T-cell (primary cell): ENCODE measurements at regions of chr12 and their contacts with region 1.

Region 1: GRCh38 chr12:53530920-53531319 is 23.6 kb upstream of the NPFF start:
- DNase-seq: no peak
- ATAC-seq: no peak
- H3K4me3 ChIP-seq: no peak overlapping the region
- H3K4me3 Mint-ChIP-seq: no peak overlapping the region
- H3K27ac ChIP-seq: no peak overlapping the region
- H3K27ac Mint-ChIP-seq: no peak overlapping the region
- H3K4me1 ChIP-seq: no peaks in the 10 kb centered on the region
- H3K4me1 Mint-ChIP-seq: no peaks in the 10 kb centered on the region
- H3K27me3 ChIP-seq: no peaks in the 10 kb centered on the region
- H3K27me3 Mint-ChIP-seq: no peaks in the 10 kb centered on the region

Region 2: GRCh38 chr12:53441040-53441833 is 89.7 kb before region 1 on chr12 and contains the start of gene PRR13:
- CTCF ChIA-PET with region 1: no interaction called
- POLR2A ChIA-PET with region 1: no interaction called
- DNase-seq: peak; percentile 92 to 100 (median 99)
- ATAC-seq: peak; percentile 98 to 99 (median 99)
- H3K4me3 ChIP-seq: peak within 1 kb of the TSS; percentile 90 to 94
- H3K4me3 Mint-ChIP-seq: peak within 1 kb of the TSS; percentile 86 to 97 (median 95)
- H3K27ac ChIP-seq: peak within 1 kb of the TSS; percentile 74
- H3K27ac Mint-ChIP-seq: peak within 1 kb of the TSS; percentile 96 to 98
- H3K4me1 ChIP-seq: peaks cover 14 to 34% of the 10 kb centered on the region in 2 experiments
- H3K4me1 Mint-ChIP-seq: peaks cover 38 to 51% (median 47%) of the 10 kb centered on the region in 3 donors
- H3K27me3 ChIP-seq: no peaks in the 10 kb centered on the region
- H3K27me3 Mint-ChIP-seq: no peaks in the 10 kb centered on the region
- total RNA-seq, gene PRR13: 175 to 215 (median 187) TPM

Region 3: GRCh38 chr12:53568809-53569557 is 38.1 kb after region 1 on chr12:
- CTCF ChIA-PET with region 1: interaction called, 5 to 10 read pairs
- POLR2A ChIA-PET with region 1: no interaction called
- DNase-seq: no peak
- ATAC-seq: no peak
- H3K4me3 ChIP-seq: no peak overlapping the region
- H3K4me3 Mint-ChIP-seq: no peak overlapping the region
- H3K27ac ChIP-seq: no peak overlapping the region
- H3K27ac Mint-ChIP-seq: peak overlapping the region in 1 of 2 donors; percentile 64
- H3K4me1 ChIP-seq: peaks cover 12 to 21% of the 10 kb centered on the region in 2 experiments
- H3K4me1 Mint-ChIP-seq: peaks cover 51 to 63% (median 53%) of the 10 kb centered on the region in 3 donors
- H3K27me3 ChIP-seq: no peaks in the 10 kb centered on the region
- H3K27me3 Mint-ChIP-seq: no peaks in the 10 kb centered on the region

Region 4: GRCh38 chr12:53660041-53660440 is 129.1 kb after region 1 on chr12:
- CTCF ChIA-PET with region 1: no interaction called
- POLR2A ChIA-PET with region 1: no interaction called
- DNase-seq: no peak
- ATAC-seq: no peak
- H3K4me3 ChIP-seq: no peak overlapping the region
- H3K4me3 Mint-ChIP-seq: no peak overlapping the region
- H3K27ac ChIP-seq: no peak overlapping the region
- H3K27ac Mint-ChIP-seq: peak overlapping the region in 1 of 2 donors; percentile 1
- H3K4me1 ChIP-seq: no peaks in the 10 kb centered on the region
- H3K4me1 Mint-ChIP-seq: no peaks in the 10 kb centered on the region
- H3K27me3 ChIP-seq: no peaks in the 10 kb centered on the region
- H3K27me3 Mint-ChIP-seq: no peaks in the 10 kb centered on the region

Region 5: GRCh38 chr12:53727310-53728041 is 196.6 kb after region 1 on chr12 and contains the start of gene CALCOCO1:
- CTCF ChIA-PET with region 1: no interaction called
- POLR2A ChIA-PET with region 1: no interaction called
- DNase-seq: peak; percentile 87 to 99 (median 98)
- ATAC-seq: peak; percentile 92 to 100 (median 98)
- H3K4me3 ChIP-seq: peak within 1 kb of the TSS; percentile 78 to 82
- H3K4me3 Mint-ChIP-seq: peak within 1 kb of the TSS; percentile 91 to 94 (median 92)
- H3K27ac ChIP-seq: peak within 1 kb of the TSS; percentile 82
- H3K27ac Mint-ChIP-seq: peak within 1 kb of the TSS; percentile 90 to 91
- H3K4me1 ChIP-seq: peaks cover 2 to 29% of the 10 kb centered on the region in 2 experiments
- H3K4me1 Mint-ChIP-seq: peaks cover 31 to 32% (median 31%) of the 10 kb centered on the region in 3 donors
- H3K27me3 ChIP-seq: no peaks in the 10 kb centered on the region
- H3K27me3 Mint-ChIP-seq: no peaks in the 10 kb centered on the region
- total RNA-seq, gene CALCOCO1: 118 to 162 (median 153) TPM